ENCODE measurements at regions of chr1 and their contacts with region 1.

Region 1: GRCh38 chr1:89605692-89606091 is 27.2 kb upstream of the LRRC8C start:
- DNase-seq: no peak
- H3K4me3 Mint-ChIP-seq: no peak overlapping the region
- H3K27ac Mint-ChIP-seq: peak overlapping the region; percentile 99
- H3K4me1 Mint-ChIP-seq: peaks cover 93% of the 10 kb centered on the region
- H3K27me3 Mint-ChIP-seq: no peaks in the 10 kb centered on the region

Region 2: DNA sequence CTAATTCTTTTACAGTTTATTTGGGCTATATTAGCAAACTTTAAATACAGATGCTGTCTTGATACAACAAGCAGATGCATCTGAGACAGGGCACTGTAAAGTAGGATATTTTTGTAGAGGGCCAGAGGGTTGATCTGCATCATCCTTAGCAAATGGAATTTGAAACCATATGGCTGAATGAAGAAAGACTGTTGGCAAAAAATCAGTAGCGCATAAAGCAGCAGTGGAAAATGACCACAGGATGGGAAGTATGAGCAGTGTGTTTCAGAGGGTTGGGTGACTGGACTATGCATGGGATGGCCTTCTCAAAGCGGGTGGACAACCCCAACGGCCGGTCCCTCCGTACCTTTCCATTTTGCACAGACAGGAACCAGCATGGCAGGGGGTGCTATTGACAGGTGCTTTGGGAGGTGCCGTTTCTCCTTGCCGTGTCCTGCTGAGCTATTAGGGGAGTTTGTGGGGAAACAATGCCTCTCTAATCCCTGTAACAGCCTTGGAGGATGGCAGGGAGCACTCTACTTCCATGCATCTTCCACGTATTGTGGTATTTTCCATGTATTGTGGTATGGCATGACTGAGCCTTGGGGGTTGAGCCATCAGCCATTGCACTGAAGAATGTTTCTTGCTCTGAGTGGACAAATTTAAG is 75.1 kb before region 1 on chr1:
- CTCF ChIA-PET with region 1: no interaction called
- POLR2A ChIA-PET with region 1: no interaction called
- DNase-seq: no peak
- H3K4me3 Mint-ChIP-seq: no peak overlapping the region
- H3K27ac Mint-ChIP-seq: no peak overlapping the region
- H3K4me1 Mint-ChIP-seq: peaks cover 51% of the 10 kb centered on the region
- H3K27me3 Mint-ChIP-seq: no peaks in the 10 kb centered on the region

Region 3: DNA sequence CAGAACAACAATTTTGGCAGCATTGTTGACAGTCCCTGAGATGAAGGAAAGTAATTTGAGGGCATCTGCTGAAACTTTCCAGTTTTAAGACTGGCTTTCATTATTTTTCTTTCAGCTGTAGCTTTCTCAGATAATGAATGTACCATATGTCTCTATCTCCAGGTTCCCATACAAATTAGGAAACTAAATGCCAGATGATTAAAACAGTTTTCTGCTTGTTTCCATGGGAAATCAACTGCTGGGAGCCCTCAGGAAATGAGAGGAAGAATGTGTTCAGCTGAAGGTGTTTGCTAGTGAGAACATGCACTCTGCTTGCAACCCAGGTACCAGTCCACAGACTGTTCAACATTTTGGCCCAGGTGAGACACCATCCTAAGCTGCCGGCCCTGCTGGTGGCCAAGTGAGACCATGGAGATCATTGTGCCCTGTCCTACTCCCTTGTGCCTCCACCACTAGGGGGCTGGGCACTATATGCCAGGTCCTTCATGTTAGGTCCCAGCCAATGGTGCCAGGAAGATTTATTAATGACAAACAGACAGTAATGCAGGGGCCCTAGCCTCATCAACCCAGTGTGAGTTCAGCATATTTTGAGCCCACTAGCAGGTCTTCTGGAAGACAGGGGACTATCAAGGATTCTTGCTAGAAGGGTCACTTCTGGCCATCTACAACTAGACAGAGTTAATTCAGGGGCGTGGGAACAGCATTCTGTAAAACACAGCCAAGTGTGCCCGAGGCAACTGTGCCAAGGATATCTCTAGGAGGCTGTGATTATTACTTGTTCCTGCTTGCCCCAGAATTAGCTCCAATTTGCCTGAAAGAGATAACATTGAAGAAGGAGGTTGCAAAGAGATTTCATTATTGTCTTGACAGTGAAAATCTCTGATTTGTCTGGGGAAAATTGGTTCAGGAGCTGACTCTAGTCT is 10.2 kb after region 1 on chr1:
- CTCF ChIA-PET with region 1: interaction called, 11 read pairs
- POLR2A ChIA-PET with region 1: interaction called, 3 read pairs
- DNase-seq: no peak
- H3K4me3 Mint-ChIP-seq: no peak overlapping the region
- H3K27ac Mint-ChIP-seq: peak overlapping the region; percentile 38
- H3K4me1 Mint-ChIP-seq: peaks cover 74% of the 10 kb centered on the region
- H3K27me3 Mint-ChIP-seq: no peaks in the 10 kb centered on the region

Region 4: GRCh38 chr1:89622895-89623294 is 17.2 kb after region 1 on chr1:
- CTCF ChIA-PET with region 1: interaction called, 6 read pairs
- POLR2A ChIA-PET with region 1: interaction called, 10 read pairs
- DNase-seq: no peak
- H3K4me3 Mint-ChIP-seq: no peak overlapping the region
- H3K27ac Mint-ChIP-seq: no peak overlapping the region
- H3K4me1 Mint-ChIP-seq: peaks cover 58% of the 10 kb centered on the region
- H3K27me3 Mint-ChIP-seq: no peaks in the 10 kb centered on the region

Region 5: DNA sequence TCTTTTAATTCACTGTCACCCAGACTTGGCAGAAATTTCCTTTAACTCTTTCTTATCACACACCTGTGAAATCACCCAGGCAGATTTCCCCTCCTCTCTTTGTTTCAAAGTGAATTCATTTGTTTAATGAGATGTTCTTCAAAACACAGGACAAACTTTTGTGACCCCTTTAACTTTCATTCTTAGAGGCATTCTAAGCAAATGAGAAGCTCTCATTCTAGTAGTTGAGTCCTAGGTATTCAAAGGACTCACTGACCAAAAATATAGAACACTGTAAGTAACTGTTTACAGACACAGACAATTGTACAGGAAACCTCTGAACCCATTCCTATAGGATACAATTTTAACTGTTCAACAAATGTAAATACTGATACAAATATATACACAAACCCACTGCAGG is 44.1 kb after region 1 on chr1:
- CTCF ChIA-PET with region 1: no interaction called
- POLR2A ChIA-PET with region 1: no interaction called
- DNase-seq: no peak
- H3K4me3 Mint-ChIP-seq: no peak overlapping the region
- H3K27ac Mint-ChIP-seq: no peak overlapping the region
- H3K4me1 Mint-ChIP-seq: peaks cover 67% of the 10 kb centered on the region
- H3K27me3 Mint-ChIP-seq: no peaks in the 10 kb centered on the region

Region 6: GRCh38 chr1:90201467-90202358 is 596.0 kb after region 1 on chr1:
- CTCF ChIA-PET with region 1: no interaction called
- POLR2A ChIA-PET with region 1: no interaction called
- DNase-seq: no peak
- H3K4me3 Mint-ChIP-seq: no peak overlapping the region
- H3K27ac Mint-ChIP-seq: no peak overlapping the region
- H3K4me1 Mint-ChIP-seq: no peaks in the 10 kb centered on the region
- H3K27me3 Mint-ChIP-seq: no peaks in the 10 kb centered on the region